ENCODE measurements at regions of chr1 and their contacts with region 1.

Region 1: DNA sequence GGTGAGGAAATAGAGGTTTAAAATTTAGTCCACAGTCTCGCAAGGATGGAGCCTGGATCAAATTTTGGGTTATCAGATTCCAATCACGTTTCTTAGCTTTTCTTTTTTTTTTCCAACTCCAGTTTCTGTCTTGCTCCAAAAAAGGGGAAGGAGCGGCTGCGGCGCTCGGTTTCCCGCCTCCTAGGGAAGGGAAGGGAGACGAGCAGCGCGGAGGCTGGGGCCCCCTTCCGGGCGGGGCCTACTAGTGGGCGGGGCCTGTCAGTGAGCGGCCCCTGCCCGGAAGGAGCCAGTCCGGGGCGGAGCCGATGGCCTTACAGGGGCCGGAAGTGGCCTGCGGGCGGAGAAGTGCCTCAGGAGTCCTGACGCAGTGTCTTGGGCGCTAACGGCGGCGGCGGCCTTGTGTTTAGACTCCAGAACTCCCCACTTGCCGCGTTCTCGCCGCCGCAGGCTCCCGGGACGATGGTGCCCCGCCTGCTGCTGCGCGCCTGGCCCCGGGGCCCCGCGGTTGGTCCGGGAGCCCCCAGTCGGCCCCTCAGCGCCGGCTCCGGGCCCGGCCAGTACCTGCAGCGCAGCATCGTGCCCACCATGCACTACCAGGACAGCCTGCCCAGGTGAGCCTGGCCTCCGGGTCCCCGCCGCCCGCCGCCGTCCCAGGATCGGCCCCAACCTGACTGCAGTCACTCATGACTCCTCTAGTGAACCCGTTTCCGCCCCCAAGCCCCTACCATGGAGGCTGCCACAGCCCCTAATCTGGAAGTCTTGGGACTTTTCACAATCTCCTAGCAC is at the start of gene CPT2:
- DNase-seq: peak; percentile 96
- ATAC-seq: peak; percentile 98
- H3K4me3 Mint-ChIP-seq: peak within 1 kb of the TSS; percentile 98
- H3K27ac Mint-ChIP-seq: peak within 1 kb of the TSS; percentile 99
- H3K4me1 Mint-ChIP-seq: peaks cover 25% of the 10 kb centered on the region
- H3K27me3 Mint-ChIP-seq: no peaks in the 10 kb centered on the region
- total RNA-seq, gene CPT2: 20.7 to 23.7 TPM

Region 2: GRCh38 chr1:52792036-52792435 is 404.6 kb before region 1 on chr1:
- CTCF ChIA-PET with region 1: no interaction called
- POLR2A ChIA-PET with region 1: no interaction called
- intact Hi-C with region 1: no loop called
- DNase-seq: no peak
- ATAC-seq: no peak
- H3K4me3 Mint-ChIP-seq: no peak overlapping the region
- H3K27ac Mint-ChIP-seq: no peak overlapping the region
- H3K4me1 Mint-ChIP-seq: no peaks in the 10 kb centered on the region
- H3K27me3 Mint-ChIP-seq: no peaks in the 10 kb centered on the region

Region 3: GRCh38 chr1:52920791-52921291 is 275.8 kb before region 1 on chr1:
- CTCF ChIA-PET with region 1: no interaction called
- POLR2A ChIA-PET with region 1: interaction called, 3 read pairs
- intact Hi-C with region 1: loop called in 1 of 2 experiments (anchors 1 kb)
- DNase-seq: no peak
- ATAC-seq: no peak
- H3K4me3 Mint-ChIP-seq: peak overlapping the region; percentile 84
- H3K27ac Mint-ChIP-seq: no peak overlapping the region
- H3K4me1 Mint-ChIP-seq: peaks cover 27% of the 10 kb centered on the region
- H3K27me3 Mint-ChIP-seq: no peaks in the 10 kb centered on the region

Region 4: DNA sequence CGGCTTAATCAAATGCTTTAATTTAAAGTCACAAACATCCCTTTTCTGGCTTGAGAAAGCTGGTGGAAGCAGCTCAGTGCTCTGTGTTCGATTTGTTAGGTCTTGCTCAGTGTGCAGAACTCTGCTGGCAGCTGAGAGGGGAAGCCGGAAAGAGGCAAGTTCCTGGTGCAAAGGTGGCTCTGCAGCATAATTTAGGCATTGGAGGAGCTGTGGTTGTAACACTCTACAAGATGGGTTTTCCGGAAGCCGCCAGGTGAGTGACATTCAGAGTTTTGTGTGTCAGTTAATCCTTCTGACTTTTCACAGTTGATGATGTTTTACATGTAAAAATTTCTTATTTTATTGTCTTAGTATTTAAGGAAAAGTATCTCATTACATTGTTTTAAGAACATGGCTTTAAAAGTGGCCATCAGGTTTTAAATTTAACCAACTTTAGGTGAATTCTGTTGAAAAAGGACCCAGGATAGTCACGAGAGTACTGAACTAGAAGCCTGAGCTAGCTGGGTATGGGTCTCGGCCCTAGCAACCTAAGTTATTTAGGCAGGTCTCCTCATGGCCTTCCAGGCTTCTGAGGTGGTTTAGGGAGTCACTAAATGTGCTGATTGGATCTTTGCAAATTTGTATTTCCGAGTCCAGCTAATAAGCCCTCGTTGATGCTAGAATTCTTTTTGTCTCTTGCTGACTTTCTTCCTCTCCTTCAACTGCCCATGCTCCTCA is 181.7 kb before region 1 on chr1:
- CTCF ChIA-PET with region 1: no interaction called
- POLR2A ChIA-PET with region 1: no interaction called
- intact Hi-C with region 1: loop called in 1 of 2 experiments (anchors 5 kb)
- DNase-seq: peak; percentile 84
- ATAC-seq: peak; percentile 99
- H3K4me3 Mint-ChIP-seq: peak overlapping the region; percentile 79
- H3K27ac Mint-ChIP-seq: peak overlapping the region; percentile 89
- H3K4me1 Mint-ChIP-seq: peaks cover 24% of the 10 kb centered on the region
- H3K27me3 Mint-ChIP-seq: no peaks in the 10 kb centered on the region

Region 5: DNA sequence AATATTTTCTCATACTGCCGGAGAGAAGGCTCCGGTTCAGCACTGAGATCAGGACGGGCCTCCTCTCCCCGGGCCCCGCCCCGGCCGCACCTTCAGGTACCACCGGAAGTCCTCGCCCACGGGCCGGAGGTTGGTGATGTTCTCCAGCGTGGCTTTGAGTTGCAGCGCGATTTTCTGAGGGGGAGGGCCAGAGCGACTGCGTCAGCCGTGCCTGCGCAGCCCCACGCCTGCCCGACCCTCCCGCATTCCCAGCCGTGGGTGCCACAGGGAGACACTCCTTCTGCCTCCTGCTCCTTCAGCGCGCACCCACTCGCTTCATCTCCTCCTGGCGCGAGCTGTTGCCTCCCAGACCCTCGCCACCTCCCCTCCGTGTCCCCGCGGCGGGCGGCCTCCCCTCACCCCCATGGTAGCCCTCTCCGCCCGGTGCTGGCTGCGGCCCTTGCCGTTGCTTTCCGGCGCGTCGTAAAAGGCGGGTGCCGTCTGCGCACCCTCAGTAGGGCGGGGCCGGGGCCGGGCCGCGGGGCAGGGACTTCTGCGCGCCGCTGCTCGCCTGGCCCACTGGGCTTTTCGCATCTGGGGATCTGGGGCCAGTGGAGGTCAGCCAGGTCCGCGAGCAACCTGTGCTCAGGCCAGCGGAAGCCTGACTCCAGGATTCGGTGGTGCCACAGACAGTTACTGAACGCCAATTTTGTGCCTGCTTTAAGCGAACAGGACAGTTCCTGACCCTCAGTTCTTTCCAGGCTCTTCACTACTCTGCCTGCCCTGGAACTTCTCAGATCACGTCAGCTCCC is 23.7 kb after region 1 on chr1 and contains the start of gene CZIB:
- CTCF ChIA-PET with region 1: interaction called, 3 read pairs
- POLR2A ChIA-PET with region 1: no interaction called
- intact Hi-C with region 1: loop called (anchors 1 kb)
- DNase-seq: peak; percentile 98
- ATAC-seq: peak; percentile 95
- H3K4me3 Mint-ChIP-seq: peak within 1 kb of the TSS; percentile 87
- H3K27ac Mint-ChIP-seq: peak within 1 kb of the TSS; percentile 94
- H3K4me1 Mint-ChIP-seq: peaks cover 24% of the 10 kb centered on the region
- H3K27me3 Mint-ChIP-seq: no peaks in the 10 kb centered on the region
- total RNA-seq, gene CZIB: 45.4 to 48.7 TPM